ENCODE measurements at regions of chr17 and their contacts with region 1.

Region 1: GRCh38 chr17:2416010-2416734 is 15.3 kb upstream of the MNT start:
- DNase-seq: peak; percentile 81 to 82 (median 82)
- H3K4me3 ChIP-seq: no peak overlapping the region
- H3K4me3 Mint-ChIP-seq: no peak overlapping the region
- H3K27ac ChIP-seq: no peak overlapping the region
- H3K27ac Mint-ChIP-seq: peak overlapping the region in 3 of 7 donors; percentile 60 to 78 (median 78)
- H3K4me1 ChIP-seq: peaks cover 0 to 12% of the 10 kb centered on the region in 2 donors
- H3K4me1 Mint-ChIP-seq: peaks cover 12% of the 10 kb centered on the region
- H3K27me3 ChIP-seq: no peaks in the 10 kb centered on the region
- H3K27me3 Mint-ChIP-seq: peaks cover 0 to 4% (median 3%) of the 10 kb centered on the region in 3 donors
- CTCF ChIP-seq: peak; percentile 98

Region 2: DNA sequence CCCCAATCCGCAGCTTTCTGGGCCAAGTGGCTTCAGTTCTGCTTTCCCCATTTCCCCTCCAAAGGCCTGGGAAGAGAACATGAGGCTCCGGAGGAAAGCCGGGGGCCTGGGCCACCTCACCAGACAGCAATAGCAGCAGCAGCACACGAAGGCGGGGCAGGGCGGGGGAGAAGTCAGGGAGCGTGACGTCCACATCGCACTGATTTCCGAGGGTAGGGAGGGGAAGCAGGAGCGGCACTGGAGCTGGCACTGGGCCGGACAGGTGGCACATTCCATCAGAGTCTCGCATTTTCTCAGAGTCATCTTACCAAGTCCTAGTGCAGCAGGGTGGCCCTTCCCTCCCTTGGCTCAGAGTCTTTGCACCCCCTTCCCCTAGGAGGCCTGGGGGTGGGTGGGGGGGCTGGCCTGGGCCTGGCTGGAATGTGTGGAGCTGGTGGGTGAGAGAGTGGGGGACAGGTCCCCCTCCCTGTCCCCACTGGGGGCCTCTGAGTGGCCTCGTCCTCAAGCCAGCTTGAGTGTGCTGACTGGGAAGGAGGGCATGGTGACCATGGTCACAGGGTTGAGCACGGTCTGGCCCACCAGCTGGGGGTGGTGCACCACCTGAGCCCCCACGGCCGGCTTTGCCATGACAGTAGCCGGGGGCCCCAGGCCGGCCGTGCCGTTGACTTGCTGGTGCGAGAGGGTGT is 29.6 kb before region 1 on chr17:
- intact Hi-C with region 1: loop called (anchors 1 kb)
- DNase-seq: no peak
- H3K4me3 ChIP-seq: no peak overlapping the region
- H3K4me3 Mint-ChIP-seq: no peak overlapping the region
- H3K27ac ChIP-seq: no peak overlapping the region
- H3K27ac Mint-ChIP-seq: peak overlapping the region in 1 of 7 donors; percentile 21
- H3K4me1 ChIP-seq: peaks cover 23 to 27% of the 10 kb centered on the region in 2 donors
- H3K4me1 Mint-ChIP-seq: peaks cover 29% of the 10 kb centered on the region
- H3K27me3 ChIP-seq: no peaks in the 10 kb centered on the region
- H3K27me3 Mint-ChIP-seq: peaks cover 0 to 2% (median 0%) of the 10 kb centered on the region in 3 donors
- CTCF ChIP-seq: no peak

Region 3: DNA sequence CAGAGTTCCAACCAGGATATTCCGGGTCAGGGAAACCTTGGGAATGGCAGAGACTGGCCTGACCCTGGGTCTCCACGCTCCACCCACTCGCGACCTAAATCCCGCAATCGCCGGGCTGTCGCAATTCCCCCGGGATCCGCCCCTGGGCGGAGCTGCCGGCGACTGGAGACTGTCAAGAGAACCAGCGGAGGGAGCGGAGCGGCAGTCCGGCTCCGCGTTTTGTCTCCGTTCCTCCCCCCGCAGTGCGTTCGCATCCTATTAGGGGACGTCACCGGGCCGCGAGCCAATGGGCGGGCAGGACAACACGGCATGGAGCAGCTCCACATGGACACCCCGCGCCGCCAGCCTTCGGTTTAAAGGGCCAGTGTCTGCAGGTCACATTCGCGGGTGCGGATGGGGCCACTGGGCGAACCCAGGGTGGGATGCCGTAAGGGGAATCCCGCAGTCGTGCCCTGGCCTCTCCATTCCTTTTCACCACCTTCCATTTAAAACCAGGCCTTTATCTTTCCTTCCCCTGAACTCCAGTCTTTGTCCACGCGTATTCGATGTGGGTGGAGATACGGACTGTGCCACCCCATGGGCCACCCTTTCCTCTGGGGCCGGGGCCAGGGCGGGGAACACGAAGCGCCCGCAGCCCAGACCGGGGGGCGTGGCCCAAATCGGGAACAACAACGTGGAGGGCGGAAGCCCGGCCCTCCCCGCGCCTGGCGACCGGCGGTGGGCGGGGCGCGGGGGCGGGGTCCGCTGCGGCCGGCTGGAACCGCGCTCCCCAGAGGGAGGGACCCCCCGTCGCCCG is 14.5 kb before region 1 on chr17:
- intact Hi-C with region 1: loop called in 1 of 2 experiments (anchors 1 kb)
- DNase-seq: peak; percentile 98 to 99 (median 99)
- H3K4me3 ChIP-seq: peak overlapping the region; percentile 37 to 98 (median 55)
- H3K4me3 Mint-ChIP-seq: peak overlapping the region; percentile 90 to 99
- H3K27ac ChIP-seq: peak overlapping the region; percentile 96 to 100
- H3K27ac Mint-ChIP-seq: peak overlapping the region; percentile 98 to 100 (median 100)
- H3K4me1 ChIP-seq: peaks cover 64 to 73% of the 10 kb centered on the region in 2 donors
- H3K4me1 Mint-ChIP-seq: peaks cover 65% of the 10 kb centered on the region
- H3K27me3 ChIP-seq: no peaks in the 10 kb centered on the region
- H3K27me3 Mint-ChIP-seq: peaks cover 0 to 7% (median 0%) of the 10 kb centered on the region in 3 donors
- CTCF ChIP-seq: no peak

Region 4: DNA sequence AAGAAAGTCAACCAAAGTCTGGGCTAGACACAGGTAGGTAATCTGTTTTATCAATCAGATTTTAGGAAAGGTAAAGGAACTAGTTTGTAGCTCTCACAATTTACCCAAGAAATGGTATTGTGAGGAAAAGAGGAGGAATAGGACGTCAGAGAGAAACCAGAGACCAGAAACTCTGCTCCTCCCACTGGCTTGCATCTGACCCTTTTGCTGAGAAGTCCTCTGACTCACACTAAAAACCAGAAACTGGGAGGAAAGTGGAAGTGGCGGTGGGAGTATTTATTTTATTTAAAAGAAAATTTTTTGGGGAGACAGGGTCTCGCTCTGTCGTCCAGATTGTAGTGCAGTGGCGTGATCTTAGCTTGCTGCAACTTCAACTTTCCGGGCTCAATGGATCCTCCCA is 22.7 kb after region 1 on chr17:
- intact Hi-C with region 1: no loop called
- DNase-seq: peak; percentile 79 to 88 (median 88)
- H3K4me3 ChIP-seq: peak overlapping the region in 1 of 3 experiments; percentile 61
- H3K4me3 Mint-ChIP-seq: peak overlapping the region in 1 of 2 donors; percentile 82
- H3K27ac ChIP-seq: peak overlapping the region; percentile 90 to 96
- H3K27ac Mint-ChIP-seq: peak overlapping the region; percentile 95 to 99 (median 98)
- H3K4me1 ChIP-seq: peaks cover 30 to 47% of the 10 kb centered on the region in 2 donors
- H3K4me1 Mint-ChIP-seq: peaks cover 36% of the 10 kb centered on the region
- H3K27me3 ChIP-seq: no peaks in the 10 kb centered on the region
- H3K27me3 Mint-ChIP-seq: no peaks in the 10 kb centered on the region
- CTCF ChIP-seq: no peak

Region 5: GRCh38 chr17:2521257-2521656 is 105.1 kb after region 1 on chr17:
- intact Hi-C with region 1: no loop called
- DNase-seq: no peak
- H3K4me3 ChIP-seq: no peak overlapping the region
- H3K4me3 Mint-ChIP-seq: no peak overlapping the region
- H3K27ac ChIP-seq: no peak overlapping the region
- H3K27ac Mint-ChIP-seq: no peak overlapping the region
- H3K4me1 ChIP-seq: no peaks in the 10 kb centered on the region
- H3K4me1 Mint-ChIP-seq: no peaks in the 10 kb centered on the region
- H3K27me3 ChIP-seq: no peaks in the 10 kb centered on the region
- H3K27me3 Mint-ChIP-seq: peaks cover 0 to 9% (median 1%) of the 10 kb centered on the region in 3 donors
- CTCF ChIP-seq: no peak

Measured in CD14-positive monocyte (primary cell).